ENCODE measurements at regions of chr1 and their contacts with region 1.

Region 1: DNA sequence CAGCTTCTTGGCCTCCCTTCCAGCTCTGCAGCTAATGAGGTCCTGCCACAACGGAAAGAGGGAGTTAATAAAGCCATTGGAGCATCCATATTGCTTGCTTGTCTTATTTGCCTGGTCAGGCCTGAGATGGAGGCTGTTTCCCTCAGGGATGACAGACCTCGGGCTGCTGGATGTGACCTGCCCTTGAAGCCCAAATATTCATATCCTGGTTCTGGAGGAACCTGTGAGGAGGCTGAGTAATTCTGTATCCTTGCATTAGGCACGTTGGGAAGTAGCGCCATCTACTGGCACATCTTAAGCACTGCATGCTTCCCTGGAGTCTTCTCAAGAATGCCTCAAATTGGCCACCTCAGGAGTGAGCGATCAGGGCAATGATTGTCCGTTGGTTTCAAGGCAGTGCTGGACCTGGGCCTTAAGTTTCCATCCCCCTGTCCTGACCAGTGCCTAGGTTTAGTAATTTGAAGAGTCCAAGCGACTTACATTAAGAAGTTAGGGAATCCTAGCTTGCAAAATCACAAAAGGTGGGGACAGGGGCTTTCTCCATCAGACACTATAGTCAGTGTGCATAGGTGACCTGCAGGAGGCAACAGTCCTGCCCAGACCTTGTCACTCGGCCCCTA is 13.8 kb upstream of the NASP start:
- DNase-seq: peak; percentile 71
- CTCF ChIP-seq: peak; percentile 96

Region 2: DNA sequence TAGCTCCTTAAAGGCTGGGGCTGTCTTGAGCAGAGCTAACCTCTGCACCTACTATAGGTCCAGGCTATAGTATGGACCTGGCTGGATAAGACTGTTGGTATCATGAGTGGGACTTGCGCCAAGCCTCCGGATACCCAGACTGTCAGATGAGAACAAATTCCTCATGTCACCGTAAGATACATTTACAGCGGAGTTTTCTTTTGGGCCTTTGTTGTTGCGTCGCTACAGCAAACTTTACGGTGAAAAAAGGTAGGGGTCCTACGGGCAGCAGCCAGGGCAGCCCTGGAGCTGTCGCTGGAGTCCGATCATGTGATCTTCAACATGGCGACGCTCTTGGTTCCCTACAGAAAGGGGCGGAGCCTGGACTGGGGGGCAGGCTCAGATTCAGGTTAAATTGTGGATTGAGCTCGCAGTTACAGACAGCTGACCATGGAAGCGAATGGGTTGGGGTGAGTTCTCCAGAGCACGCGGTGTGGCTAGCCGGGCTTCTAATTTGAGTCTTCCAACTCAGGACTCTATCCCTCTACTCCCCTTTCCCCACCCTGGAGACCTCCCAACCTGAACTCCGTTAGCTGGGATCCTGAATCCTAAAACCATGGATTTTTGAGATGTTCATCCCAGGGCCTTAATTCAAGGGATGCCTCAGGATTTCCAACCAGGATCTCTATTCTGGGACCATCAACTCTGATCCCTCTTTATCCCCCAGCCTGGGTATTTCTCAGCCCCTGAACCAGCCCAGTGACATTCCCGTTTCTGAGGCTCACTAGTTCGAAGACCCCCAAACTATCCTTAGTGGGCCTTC is 558.0 kb before region 1 on chr1 and contains the start of gene UROD:
- CTCF ChIA-PET with region 1: interaction called, 10 read pairs
- POLR2A ChIA-PET with region 1: no interaction called
- DNase-seq: peak; percentile 95
- CTCF ChIP-seq: no peak

Region 3: GRCh38 chr1:45490626-45491486 is 79.2 kb before region 1 on chr1 and contains the start of gene TESK2:
- CTCF ChIA-PET with region 1: interaction called, 51 read pairs
- POLR2A ChIA-PET with region 1: no interaction called
- DNase-seq: peak; percentile 95
- CTCF ChIP-seq: no peak

Region 4: DNA sequence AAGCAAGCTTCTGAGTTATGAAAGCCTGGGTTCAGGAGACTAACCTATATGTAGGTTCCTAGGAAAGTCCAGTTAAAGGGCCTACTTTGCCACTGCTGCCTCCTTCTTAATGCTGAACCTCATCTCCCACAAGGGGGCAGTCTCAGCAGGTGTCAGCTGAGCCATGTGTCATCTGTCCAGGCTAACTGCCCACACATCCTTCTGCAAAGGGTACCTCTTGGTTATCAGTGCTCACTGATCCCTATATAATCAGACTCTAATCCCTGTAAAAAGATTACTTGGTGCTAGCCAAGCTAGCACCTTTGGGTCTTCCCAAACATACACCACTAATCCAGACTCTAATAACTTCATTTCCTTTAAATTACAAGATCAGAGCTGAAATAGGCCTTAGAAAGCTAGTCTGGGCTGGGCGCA is 57.4 kb before region 1 on chr1:
- CTCF ChIA-PET with region 1: interaction called, 121 read pairs
- POLR2A ChIA-PET with region 1: interaction called, 8 read pairs
- DNase-seq: peak; percentile 64
- CTCF ChIP-seq: peak; percentile 71

Region 5: DNA sequence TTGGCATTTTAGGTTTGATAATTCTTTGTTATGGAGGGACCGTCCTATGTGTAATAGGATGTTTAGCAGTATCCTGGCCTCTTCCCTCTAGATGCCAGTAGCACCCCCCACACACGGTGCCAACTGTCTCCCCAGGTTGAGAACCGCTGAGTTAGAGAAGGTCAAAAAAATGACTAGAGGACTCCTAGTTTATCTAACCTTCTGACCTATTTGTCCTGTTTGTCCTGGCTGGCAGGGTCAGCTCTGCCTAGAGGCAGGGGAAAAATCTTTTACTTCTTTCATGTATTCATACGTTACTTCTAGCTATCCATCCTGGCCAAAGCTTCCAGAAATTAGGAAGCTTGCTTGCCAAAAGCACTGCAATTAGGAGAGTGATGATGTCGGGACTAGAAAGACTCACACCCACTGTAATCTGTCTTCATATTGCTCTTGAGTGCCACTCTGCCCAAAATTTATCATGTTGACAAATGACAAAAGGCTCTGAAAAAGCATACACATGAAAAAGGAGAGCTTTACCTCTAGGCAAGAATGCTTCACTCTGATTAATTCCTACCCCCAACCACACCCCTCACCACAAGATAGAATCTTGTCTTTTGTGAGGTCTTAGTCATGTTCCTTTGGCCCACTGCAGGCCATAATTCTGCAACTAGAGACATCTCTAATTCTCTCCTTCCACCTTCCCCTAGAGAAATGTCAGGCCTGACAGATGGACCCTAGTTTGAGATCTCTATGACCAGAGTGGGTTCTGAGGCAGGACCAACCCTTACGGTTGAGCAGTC is 33.9 kb before region 1 on chr1:
- CTCF ChIA-PET with region 1: interaction called, 19 read pairs
- POLR2A ChIA-PET with region 1: no interaction called
- DNase-seq: no peak
- CTCF ChIP-seq: no peak

Region 6: DNA sequence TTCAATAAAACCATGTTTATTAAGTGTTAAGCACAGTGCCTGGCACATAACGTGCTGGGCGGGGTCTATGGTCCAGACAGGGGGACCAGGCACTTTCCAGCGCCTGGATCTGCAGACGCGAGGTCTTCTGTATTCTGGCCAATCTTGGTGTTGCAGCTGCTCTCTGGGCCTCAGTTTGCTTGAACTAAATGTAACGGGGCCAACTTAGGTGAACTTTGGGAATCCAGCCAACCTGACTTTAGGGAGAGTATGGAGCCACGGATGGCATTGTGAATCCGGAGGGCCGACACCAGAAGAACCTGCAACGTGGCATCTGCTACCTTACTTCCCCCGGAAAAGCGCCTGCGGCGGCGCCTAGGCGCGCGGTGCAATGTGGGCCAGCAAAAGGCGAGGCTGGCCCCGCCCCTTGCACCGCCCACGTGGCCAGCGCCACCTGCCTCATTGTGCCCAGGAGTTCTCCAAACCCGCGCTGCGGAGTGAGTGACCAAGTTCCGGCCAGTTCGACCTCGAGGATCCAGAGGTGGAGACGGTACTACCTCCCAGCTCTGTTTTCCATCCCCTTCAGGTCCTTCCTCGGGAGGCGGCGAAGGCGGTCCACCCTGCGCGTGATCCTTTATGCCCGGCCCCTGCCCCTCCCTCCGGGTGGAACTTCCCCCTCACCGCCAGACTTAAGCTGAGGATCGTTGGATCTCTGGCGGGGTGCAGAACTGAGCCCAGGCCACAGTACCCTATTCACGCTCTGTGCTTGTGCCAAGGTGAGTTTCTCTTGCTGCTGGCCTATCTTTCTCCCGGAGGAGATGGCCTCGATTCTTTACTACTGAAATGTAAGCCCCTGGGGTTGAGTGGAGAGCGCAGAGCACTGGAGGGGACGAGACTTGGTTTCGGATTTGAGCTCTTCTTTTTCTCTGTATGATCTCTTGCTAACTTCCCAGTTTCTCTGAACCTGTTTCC is 19.4 kb before region 1 on chr1 and contains the start of gene AKR1A1:
- CTCF ChIA-PET with region 1: interaction called, 43 read pairs
- POLR2A ChIA-PET with region 1: no interaction called
- DNase-seq: peak; percentile 91
- CTCF ChIP-seq: no peak

Region 7: GRCh38 chr1:45583264-45583665 is 13.2 kb after region 1 on chr1:
- CTCF ChIA-PET with region 1: interaction called, 130 read pairs
- POLR2A ChIA-PET with region 1: interaction called, 9 read pairs
- DNase-seq: peak; percentile 98
- CTCF ChIP-seq: no peak

Measured in GM10248 (cell line).